ENCODE measurements at regions of chr16 and their contacts with region 1.

Region 1: GRCh38 chr16:73956587-73957494 is 339.8 kb upstream of the PSMD7 start:
- DNase-seq: peak in 1 of 2 donors; percentile 57
- ATAC-seq: peak in 2 of 4 donors; percentile 60 to 70
- H3K4me3 ChIP-seq: no peak overlapping the region
- H3K27ac ChIP-seq: no peak overlapping the region
- H3K4me1 ChIP-seq: no peaks in the 10 kb centered on the region
- H3K27me3 ChIP-seq: no peaks in the 10 kb centered on the region
- CTCF ChIP-seq: peak; percentile 72

Region 2: DNA sequence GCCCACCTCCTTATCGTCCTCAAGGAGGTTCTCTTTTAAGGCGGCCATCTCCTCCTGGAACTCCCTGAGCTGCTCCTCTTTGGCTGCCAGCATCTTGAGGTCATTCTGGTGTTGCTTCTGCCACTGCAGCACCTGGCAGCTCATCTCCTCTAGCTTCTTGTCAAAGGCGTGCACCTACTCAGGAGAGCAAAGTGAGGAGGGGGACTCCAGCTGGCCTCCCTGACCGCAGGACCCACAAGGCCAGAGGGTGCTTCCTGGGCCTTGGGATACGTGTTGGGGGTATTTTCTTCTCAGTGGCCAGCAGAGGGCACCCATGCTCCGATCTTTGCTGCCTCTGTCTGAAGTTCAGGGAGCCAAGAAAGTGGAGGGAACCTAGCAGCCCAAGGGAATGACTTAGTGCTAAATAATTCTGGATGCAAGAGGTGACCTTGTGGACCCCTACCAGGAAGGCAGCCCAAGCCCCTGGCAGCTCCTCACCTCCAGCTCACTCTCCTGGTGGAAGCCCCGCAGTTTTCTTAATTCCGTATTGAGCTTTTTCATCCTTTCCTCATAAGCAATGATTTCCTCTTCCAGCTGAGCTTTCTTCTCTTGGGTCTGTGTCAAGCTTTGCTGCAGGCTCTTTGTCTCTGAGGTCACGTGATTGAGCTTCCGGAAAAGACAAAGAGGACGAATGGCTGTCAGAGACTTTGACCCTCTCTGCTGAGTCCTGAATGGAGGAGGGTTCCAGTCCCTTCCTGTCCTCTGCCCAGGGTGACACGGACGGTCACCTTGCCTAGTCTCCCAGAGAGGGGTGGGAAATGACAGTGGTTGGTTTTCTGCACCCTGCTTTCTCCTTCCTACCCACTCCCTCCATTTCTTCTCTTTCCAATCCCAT is 1831.8 kb before region 1 on chr16:
- intact Hi-C with region 1: loop called in 1 of 2 experiments (anchors 10 kb)
- DNase-seq: peak; percentile 77 to 84
- ATAC-seq: peak; percentile 75 to 88 (median 80)
- H3K4me3 ChIP-seq: no peak overlapping the region
- H3K27ac ChIP-seq: no peak overlapping the region
- H3K4me1 ChIP-seq: no peaks in the 10 kb centered on the region
- H3K27me3 ChIP-seq: no peaks in the 10 kb centered on the region
- CTCF ChIP-seq: peak; percentile 72

Region 3: DNA sequence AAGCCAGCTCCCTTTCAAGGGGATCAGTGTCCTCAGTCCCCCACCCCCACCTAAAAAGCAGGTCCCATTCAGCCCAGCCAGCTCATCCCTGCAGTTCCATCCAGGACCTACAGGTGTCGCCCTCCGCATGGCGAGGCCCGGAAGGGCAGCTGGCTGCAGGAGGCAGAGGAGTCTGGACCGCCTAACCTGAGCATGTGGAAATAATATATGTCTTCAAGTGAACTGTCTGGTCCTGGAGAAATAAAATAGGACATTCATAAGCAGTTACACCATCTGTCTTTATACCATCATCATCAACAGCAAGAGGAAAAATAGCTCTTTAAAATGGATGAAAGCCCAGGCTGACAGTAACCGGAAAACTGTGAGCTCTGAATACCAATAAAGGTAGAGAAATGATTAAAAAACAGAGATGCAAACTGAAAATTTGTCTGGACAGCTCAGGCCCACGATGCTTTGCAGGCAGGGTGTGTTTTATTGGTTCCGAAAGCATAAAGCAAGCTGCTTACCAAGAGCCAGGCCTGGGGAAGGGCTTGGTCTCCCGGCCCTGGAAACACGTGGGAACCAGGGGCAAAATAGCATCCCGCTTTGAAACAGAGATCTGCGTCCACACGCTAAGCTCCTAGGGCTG is 1124.1 kb before region 1 on chr16:
- intact Hi-C with region 1: loop called in 1 of 2 experiments (anchors 10 kb)
- DNase-seq: peak; percentile 89 to 93
- ATAC-seq: peak; percentile 90 to 95 (median 93)
- H3K4me3 ChIP-seq: no peak overlapping the region
- H3K27ac ChIP-seq: peak overlapping the region; percentile 47
- H3K4me1 ChIP-seq: peaks cover 9% of the 10 kb centered on the region
- H3K27me3 ChIP-seq: no peaks in the 10 kb centered on the region
- CTCF ChIP-seq: peak; percentile 96

Region 4: GRCh38 chr16:73565262-73565661 is 391.6 kb before region 1 on chr16:
- intact Hi-C with region 1: loop called in 1 of 2 experiments (anchors 10 kb)
- DNase-seq: no peak
- ATAC-seq: no peak
- H3K4me3 ChIP-seq: no peak overlapping the region
- H3K27ac ChIP-seq: no peak overlapping the region
- H3K4me1 ChIP-seq: no peaks in the 10 kb centered on the region
- H3K27me3 ChIP-seq: peaks cover 0 to 6% (median 5%) of the 10 kb centered on the region in 3 donors
- CTCF ChIP-seq: no peak